Ascending aorta (tissue), 2 donors: ENCODE measurements at regions of chr20 and their contacts with region 1.

Region 1: GRCh38 chr20:13736436-13737191 is 48.1 kb downstream of the ESF1 start:
- DNase-seq: no peak
- H3K4me3 ChIP-seq: no peak overlapping the region
- H3K27ac ChIP-seq: peak overlapping the region; percentile 85 to 88
- H3K4me1 ChIP-seq: peaks cover 0 to 39% of the 10 kb centered on the region in 2 donors
- H3K27me3 ChIP-seq: no peaks in the 10 kb centered on the region
- CTCF ChIP-seq: no peak

Region 2: DNA sequence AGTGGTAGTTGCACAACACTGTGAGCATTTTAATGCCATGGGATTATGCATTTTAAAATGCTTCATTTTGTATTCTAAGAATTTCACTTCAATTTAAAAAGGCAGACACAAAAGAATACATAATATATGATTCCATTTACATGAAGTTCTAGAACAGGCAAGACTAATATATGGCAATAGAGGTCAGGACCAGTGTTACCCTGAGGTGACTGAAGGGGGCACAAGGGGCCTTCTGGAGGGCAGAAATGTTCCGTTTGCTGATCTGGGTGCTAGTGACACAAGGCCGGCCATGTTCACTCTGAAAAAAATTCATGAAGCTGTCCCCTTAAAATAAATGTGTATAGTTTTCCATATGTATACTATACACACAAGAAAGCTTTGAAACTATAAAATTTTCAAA is 126.4 kb before region 1 on chr20:
- intact Hi-C with region 1: loop called (anchors 5 kb)
- DNase-seq: no peak
- H3K4me3 ChIP-seq: no peak overlapping the region
- H3K27ac ChIP-seq: no peak overlapping the region
- H3K4me1 ChIP-seq: peaks cover 3 to 12% of the 10 kb centered on the region in 2 donors
- H3K27me3 ChIP-seq: no peaks in the 10 kb centered on the region
- CTCF ChIP-seq: peak in 1 of 3 experiments; percentile 6

Region 3: GRCh38 chr20:13684566-13685222 is 51.9 kb before region 1 on chr20:
- intact Hi-C with region 1: loop called (anchors 5 kb)
- DNase-seq: no peak
- H3K4me3 ChIP-seq: no peak overlapping the region
- H3K27ac ChIP-seq: no peak overlapping the region
- H3K4me1 ChIP-seq: peaks cover 0 to 7% of the 10 kb centered on the region in 2 donors
- H3K27me3 ChIP-seq: no peaks in the 10 kb centered on the region
- CTCF ChIP-seq: no peak

Region 4: GRCh38 chr20:13700761-13701160 is 35.9 kb before region 1 on chr20:
- intact Hi-C with region 1: loop called (anchors 2 kb)
- DNase-seq: no peak
- H3K4me3 ChIP-seq: no peak overlapping the region
- H3K27ac ChIP-seq: peak overlapping the region; percentile 55 to 76
- H3K4me1 ChIP-seq: peaks cover 0 to 19% of the 10 kb centered on the region in 2 donors
- H3K27me3 ChIP-seq: no peaks in the 10 kb centered on the region
- CTCF ChIP-seq: no peak